Activated B cell treated with CpG ODN at 0.5 μM for 24 hours (primary cell): ENCODE measurements at regions of chr22 and their contacts with region 1.

Region 1: DNA sequence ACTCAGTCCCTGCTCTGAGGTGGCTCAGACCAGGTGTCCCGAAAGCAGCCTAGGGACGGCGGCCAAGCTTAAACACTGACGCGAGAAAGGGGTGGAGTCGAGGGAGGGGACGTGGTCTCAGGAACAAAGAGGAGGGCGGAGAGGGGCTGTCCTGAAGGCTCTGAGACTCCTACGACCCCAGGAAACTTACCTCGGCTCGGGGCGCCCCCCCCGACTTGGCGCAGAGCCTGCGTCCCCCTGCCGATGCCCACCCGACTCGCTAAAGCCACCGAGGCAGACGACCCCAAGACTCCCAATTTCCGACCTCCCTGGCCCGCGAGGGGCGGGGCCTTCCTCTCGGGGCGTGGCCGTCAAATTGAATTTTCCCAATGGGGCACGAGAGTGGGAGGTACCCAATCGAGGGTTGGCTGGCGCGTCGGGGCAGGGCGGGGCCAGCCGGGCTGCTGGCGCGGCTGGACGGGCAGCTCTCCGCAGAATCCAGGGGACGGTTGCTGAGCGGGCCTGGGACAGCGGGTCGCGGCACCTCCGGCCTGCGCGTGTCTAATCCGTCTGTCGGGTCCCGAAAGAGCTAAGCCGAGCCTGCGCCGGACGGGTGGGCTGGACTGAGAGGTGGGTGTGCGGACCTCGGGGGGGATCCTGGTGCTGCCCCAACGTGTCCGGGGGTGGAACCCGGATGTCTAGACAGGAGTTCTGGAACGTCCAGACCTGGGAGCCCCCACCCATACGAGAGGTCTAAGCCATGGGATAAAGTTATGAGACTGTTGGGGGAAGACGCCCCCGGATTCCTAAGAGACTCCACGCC is at the start of gene SMTN:
- DNase-seq: peak; percentile 93
- ATAC-seq: peak; percentile 75
- H3K4me3 Mint-ChIP-seq: peak within 1 kb of the TSS; percentile 90
- H3K27ac Mint-ChIP-seq: no peak within 1 kb of the TSS
- H3K4me1 Mint-ChIP-seq: peaks cover 36% of the 10 kb centered on the region
- H3K27me3 Mint-ChIP-seq: no peaks in the 10 kb centered on the region
- CTCF ChIP-seq: no peak
- total RNA-seq, gene SMTN: 2.8 and 3.1 TPM in 2 replicates

Region 2: GRCh38 chr22:30262917-30263741 is 817.9 kb before region 1 on chr22:
- CTCF ChIA-PET with region 1: no interaction called
- POLR2A ChIA-PET with region 1: no interaction called
- intact Hi-C with region 1: loop called (anchors 5 kb)
- DNase-seq: peak; percentile 72
- ATAC-seq: peak; percentile 13
- H3K4me3 Mint-ChIP-seq: peak overlapping the region; percentile 59
- H3K27ac Mint-ChIP-seq: peak overlapping the region; percentile 18
- H3K4me1 Mint-ChIP-seq: peaks cover 27% of the 10 kb centered on the region
- H3K27me3 Mint-ChIP-seq: no peaks in the 10 kb centered on the region
- CTCF ChIP-seq: peak; percentile 97

Region 3: DNA sequence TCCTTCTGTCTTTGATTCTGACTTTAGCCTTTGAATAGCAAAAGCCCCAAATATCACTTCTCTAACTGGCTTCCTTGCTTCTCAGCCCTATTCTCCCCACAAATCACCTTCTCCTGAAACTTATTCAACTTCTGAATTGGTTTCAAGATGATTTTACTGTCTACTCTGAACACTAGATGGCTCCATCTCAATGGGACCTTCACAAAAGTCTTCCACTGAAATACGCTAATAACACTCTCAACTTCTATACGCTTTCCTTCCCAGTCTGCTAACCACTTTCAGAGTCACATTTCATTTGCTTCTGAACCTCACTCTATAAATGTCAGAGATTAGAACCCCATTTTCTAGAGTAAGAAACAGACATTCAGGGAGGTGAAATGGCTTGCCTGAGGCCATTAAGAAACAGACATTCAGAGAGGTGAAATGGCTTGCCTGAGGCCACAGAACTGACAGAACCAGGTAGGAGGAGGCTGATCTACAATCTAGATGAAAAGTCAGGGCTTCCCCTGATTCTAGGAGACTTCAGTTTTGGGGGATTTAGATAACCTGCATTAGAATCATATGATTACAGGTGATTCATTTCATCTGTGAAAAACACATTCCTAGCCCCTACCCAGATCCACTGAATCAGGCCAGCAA is 133.1 kb before region 1 on chr22:
- CTCF ChIA-PET with region 1: interaction called, 12 read pairs
- POLR2A ChIA-PET with region 1: no interaction called
- intact Hi-C with region 1: loop called (anchors 1 kb)
- DNase-seq: no peak
- ATAC-seq: no peak
- H3K4me3 Mint-ChIP-seq: no peak overlapping the region
- H3K27ac Mint-ChIP-seq: no peak overlapping the region
- H3K4me1 Mint-ChIP-seq: no peaks in the 10 kb centered on the region
- H3K27me3 Mint-ChIP-seq: no peaks in the 10 kb centered on the region
- CTCF ChIP-seq: no peak

Region 4: DNA sequence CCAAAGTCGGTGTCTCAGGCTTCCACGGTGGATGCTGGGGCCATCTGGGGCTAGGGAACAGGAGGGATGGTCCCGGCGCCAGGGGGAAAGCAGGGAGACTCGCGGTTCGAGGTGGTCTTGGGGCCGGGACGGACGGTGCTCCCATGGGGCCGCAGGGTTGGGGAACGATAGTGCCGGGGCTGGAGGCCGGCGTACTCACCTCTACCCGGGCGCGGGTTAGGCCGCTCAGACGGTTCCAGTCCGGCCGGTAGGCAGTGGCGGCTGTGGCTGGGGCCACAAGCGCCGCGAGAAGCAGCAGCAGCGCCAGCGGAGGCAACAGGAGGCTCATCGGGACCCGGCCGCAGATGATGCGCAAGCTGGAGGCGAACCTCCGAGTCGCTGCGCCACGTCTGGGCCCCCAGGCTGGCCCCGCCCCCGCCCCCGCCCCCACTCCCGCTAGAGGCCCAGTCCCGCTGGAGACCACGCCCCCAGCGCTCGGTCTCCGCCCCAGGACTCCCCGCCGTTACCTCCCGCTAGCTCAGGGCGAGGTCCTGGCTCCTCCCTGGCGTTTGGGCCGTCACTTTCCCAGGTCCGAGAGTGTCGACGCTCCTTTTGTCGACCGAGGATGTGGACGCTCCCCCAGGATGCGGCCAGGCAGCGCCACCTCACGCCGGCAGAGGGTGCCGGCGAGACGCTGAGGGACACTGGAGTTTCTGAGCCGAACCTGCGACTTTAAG is 26.3 kb after region 1 on chr22 and contains the start of gene SELENOM:
- CTCF ChIA-PET with region 1: interaction called, 15 read pairs
- POLR2A ChIA-PET with region 1: interaction called, 6 read pairs
- intact Hi-C with region 1: loop called (anchors 1 kb)
- DNase-seq: peak; percentile 76
- ATAC-seq: peak; percentile 97
- H3K4me3 Mint-ChIP-seq: peak within 1 kb of the TSS; percentile 93
- H3K27ac Mint-ChIP-seq: peak within 1 kb of the TSS; percentile 80
- H3K4me1 Mint-ChIP-seq: peaks cover 23% of the 10 kb centered on the region
- H3K27me3 Mint-ChIP-seq: no peaks in the 10 kb centered on the region
- CTCF ChIP-seq: no peak
- total RNA-seq, gene SELENOM: 9.0 and 9.5 TPM in 2 replicates

Region 5: DNA sequence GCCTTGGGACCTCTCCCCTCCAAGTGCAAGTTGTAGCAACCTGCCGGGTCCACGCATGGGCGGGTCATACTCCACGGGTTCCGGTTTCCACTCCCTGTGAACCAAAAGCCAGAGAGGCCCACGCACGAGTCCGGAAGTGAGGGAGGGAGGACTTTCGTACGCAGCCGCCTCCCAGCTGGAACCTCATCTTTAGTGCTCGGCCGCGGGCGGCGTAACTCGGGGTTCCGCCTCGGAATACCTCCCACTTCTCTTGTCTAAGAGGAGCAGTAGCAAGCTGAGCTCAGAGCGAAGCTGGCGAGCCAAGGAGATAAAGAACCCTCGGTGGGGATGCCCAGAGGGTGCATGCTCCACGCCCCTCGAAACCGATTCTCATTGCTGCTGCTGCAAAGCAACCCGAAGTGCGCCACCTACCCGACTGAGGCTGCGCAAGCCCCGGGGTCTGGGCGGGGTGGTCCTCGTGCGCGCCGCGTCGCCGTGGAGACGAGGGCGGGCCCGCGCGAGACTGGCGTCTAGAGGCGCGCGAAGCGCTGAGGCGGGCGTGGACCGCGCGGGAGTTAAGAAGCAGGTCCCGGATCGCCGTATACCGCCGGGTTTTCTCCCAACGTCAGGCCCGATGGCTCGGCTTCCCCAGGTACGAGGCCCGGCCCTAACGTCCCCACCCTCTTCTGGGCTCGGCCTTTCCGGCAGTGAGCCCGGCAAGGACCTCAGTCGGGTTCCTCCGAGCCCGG is 415.1 kb after region 1 on chr22 and contains the start of gene SFI1:
- CTCF ChIA-PET with region 1: no interaction called
- POLR2A ChIA-PET with region 1: no interaction called
- intact Hi-C with region 1: loop called (anchors 10 kb)
- DNase-seq: peak; percentile 96
- ATAC-seq: peak; percentile 83
- H3K4me3 Mint-ChIP-seq: peak within 1 kb of the TSS; percentile 95
- H3K27ac Mint-ChIP-seq: peak within 1 kb of the TSS; percentile 97
- H3K4me1 Mint-ChIP-seq: peaks cover 42% of the 10 kb centered on the region
- H3K27me3 Mint-ChIP-seq: no peaks in the 10 kb centered on the region
- CTCF ChIP-seq: no peak
- total RNA-seq, gene SFI1: 110 and 126 TPM in 2 replicates